PC-9 (cell line): ENCODE measurements at regions of chr10 and their contacts with region 1.

Region 1: GRCh38 chr10:73225518-73225917 is 21.5 kb downstream of the DNAJC9 start:
- DNase-seq: no peak
- H3K4me3 ChIP-seq: no peak overlapping the region
- H3K27ac ChIP-seq: no peak overlapping the region
- H3K4me1 ChIP-seq: no peaks in the 10 kb centered on the region
- H3K27me3 ChIP-seq: no peaks in the 10 kb centered on the region
- CTCF ChIP-seq: no peak

Region 2: GRCh38 chr10:73209705-73210104 is 15.8 kb before region 1 on chr10:
- CTCF ChIA-PET with region 1: no interaction called
- POLR2A ChIA-PET with region 1: interaction called, 16 read pairs
- intact Hi-C with region 1: no loop called
- DNase-seq: peak in 1 of 2 experiments; percentile 5
- H3K4me3 ChIP-seq: no peak overlapping the region
- H3K27ac ChIP-seq: no peak overlapping the region
- H3K4me1 ChIP-seq: no peaks in the 10 kb centered on the region
- H3K27me3 ChIP-seq: no peaks in the 10 kb centered on the region
- CTCF ChIP-seq: no peak